Calu3 (cell line): ENCODE measurements at regions of chr2 and their contacts with region 1.

Region 1: DNA sequence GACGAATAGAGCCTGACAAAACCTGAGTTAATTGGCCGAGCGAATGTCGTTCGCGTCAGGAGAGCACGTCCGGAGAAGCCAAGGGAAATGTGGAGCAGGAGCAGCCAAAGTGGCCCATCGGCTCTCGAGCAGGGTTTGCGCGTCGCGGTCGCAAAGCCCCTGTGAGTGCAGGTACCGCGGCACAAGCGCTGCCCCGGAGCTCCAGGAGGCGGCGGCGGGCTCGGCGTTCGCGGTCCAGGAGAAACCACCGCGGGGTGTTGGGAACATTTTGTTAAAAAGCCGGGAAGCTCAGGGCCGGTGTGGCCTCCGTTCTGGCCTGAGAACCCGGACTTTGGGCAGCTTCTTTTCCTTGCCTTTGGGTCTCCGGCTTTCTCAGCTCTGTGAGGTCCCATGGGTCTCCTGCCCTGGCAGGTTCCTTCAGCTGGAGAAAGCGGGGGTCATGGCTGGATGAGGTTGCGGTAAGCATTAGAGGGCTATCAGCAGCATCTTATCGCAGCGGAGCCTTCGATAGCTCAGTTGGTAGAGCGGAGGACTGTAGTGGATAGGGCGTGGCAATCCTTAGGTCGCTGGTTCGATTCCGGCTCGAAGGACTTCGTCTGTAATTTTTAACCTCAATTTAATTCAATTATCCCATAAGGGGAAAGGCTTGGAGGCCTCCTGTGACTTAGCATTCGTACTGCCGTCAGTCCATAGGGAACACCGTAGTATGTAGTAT is 1.0 kb upstream of the AGBL5 start:
- DNase-seq: peak; percentile 91
- H3K4me3 Mint-ChIP-seq: peak overlapping the region; percentile 91
- H3K27ac Mint-ChIP-seq: peak overlapping the region; percentile 99
- H3K4me1 Mint-ChIP-seq: peaks cover 20% of the 10 kb centered on the region
- H3K27me3 Mint-ChIP-seq: peaks cover 17% of the 10 kb centered on the region
- CTCF ChIP-seq: peak; percentile 40

Region 2: GRCh38 chr2:26178746-26179436 is 871.5 kb before region 1 on chr2:
- CTCF ChIA-PET with region 1: no interaction called
- intact Hi-C with region 1: no loop called
- DNase-seq: no peak
- H3K4me3 Mint-ChIP-seq: peak overlapping the region; percentile 50
- H3K27ac Mint-ChIP-seq: no peak overlapping the region
- H3K4me1 Mint-ChIP-seq: peaks cover 13% of the 10 kb centered on the region
- H3K27me3 Mint-ChIP-seq: peaks cover 52% of the 10 kb centered on the region
- CTCF ChIP-seq: no peak

Region 3: DNA sequence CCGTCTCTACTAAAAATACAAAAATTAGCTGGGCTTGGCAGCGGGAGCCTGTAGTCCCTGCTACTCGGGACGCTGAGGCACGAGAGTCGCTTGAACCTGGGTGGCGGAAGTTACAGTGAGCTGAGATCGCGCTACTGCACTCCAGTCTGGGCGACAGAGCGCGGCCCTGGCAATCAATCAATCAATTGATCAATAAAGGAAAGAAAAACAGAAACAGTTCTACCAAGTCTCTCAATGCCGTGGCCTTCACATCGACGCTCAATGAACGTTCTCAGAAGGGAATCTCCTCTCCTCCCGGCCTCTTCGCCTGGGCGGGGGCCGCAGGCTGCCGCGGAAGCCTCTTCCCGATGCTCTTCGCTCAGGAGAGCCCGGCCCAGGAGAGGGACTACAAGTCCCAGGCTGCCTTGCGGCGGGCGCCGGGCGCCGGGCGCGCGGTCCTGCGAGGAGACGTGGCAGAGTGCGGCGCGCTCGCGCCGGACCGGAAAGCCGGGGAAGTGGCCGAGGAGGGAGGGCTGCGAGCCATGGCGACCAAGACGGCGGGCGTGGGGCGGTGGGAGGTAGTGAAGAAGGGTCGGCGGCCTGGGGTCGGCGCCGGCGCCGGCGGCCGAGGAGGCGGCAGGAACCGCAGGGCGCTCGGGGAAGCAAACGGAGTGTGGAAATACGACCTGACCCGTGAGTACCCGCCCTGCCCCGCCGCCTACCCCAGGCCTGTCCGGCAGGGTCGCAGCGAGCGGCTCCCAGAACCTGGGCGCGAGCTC is 17.8 kb before region 1 on chr2 and contains the start of gene TMEM214:
- CTCF ChIA-PET with region 1: interaction called, 6 read pairs
- intact Hi-C with region 1: loop called (anchors 2 kb)
- DNase-seq: peak; percentile 88
- H3K4me3 Mint-ChIP-seq: peak within 1 kb of the TSS; percentile 94
- H3K27ac Mint-ChIP-seq: peak within 1 kb of the TSS; percentile 61
- H3K4me1 Mint-ChIP-seq: peaks cover 26% of the 10 kb centered on the region
- H3K27me3 Mint-ChIP-seq: no peaks in the 10 kb centered on the region
- CTCF ChIP-seq: no peak
- total RNA-seq, gene TMEM214: 75.9 and 79.6 TPM in 2 replicates